Adrenal gland (tissue), 19 donors: ENCODE measurements at regions of chr1 and their contacts with region 1.

Region 1: DNA sequence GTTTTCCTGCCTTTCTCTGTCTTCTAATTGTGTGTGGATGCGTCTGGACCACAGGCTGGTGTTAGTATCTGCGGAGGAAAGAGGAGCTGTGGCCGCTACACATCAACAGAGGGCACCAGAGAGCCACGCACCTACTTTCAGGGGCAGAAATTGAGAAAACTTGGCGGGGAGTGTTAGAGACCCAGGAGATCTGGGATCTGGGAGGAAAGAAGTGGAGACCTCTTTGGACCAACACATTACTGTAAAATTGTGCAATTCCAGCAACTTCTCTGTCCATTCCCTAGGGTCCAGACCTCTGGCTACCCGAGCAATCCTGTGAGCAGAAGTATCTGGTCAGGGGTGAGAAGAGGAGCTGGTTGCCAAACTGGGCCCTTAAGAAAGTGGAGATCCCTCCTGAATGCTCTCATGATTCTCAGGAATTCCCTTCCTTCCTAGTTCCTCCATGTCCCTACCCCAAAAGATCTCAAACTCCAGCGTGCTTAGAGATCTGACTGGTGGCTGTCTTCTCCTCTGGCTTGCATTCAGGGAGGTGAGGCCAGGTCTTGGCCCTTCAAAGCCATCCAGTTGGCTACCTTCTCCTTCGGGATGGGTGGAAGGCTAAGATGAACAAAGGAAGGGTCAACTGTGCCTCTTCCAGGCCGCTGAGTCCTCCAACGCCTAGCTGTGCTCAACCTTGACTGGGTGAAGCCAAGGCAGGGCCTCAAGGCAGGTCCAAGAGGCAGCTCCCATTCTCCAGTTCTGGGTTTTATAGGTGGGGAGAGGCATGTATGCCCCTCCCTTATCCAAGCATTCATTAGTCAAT is 1.2 kb upstream of the KIRREL1 start:
- DNase-seq: peak; percentile 65 to 87 (median 77)
- H3K4me3 ChIP-seq: no peak overlapping the region
- H3K27ac ChIP-seq: peak overlapping the region in 4 of 5 donors; percentile 44 to 91 (median 52)
- H3K4me1 ChIP-seq: peaks cover 25 to 26% of the 10 kb centered on the region in 2 donors
- H3K27me3 ChIP-seq: no peaks in the 10 kb centered on the region
- CTCF ChIP-seq: peak; percentile 84 to 98 (median 94)
- POLR2A ChIP-seq: no peak

Region 2: DNA sequence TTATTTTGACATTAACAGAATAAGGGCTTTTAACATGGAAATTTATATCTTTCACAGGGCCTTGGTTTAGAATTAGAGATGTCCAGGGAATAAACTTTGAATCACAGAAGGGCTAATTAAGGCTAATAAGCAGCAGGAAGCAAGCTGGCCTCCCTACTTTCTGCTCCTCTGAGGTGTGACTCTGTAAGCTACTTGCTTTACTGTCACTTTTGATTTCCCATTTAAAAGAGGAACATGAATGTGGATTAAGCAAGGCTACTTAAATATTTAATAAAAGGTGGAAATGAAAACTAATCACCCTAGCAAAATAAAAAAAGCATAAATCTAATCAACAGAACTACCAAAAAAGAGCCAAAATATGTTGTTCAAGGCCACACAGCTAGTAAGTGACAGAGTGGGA is 121.7 kb before region 1 on chr1:
- intact Hi-C with region 1: no loop called
- DNase-seq: no peak
- H3K4me3 ChIP-seq: no peak overlapping the region
- H3K27ac ChIP-seq: no peak overlapping the region
- H3K4me1 ChIP-seq: no peaks in the 10 kb centered on the region
- H3K27me3 ChIP-seq: no peaks in the 10 kb centered on the region
- CTCF ChIP-seq: no peak
- POLR2A ChIP-seq: no peak

Region 3: GRCh38 chr1:158035976-158036583 is 43.8 kb after region 1 on chr1:
- intact Hi-C with region 1: loop called (anchors 5 kb)
- DNase-seq: peak in 6 of 7 donors; percentile 44 to 76 (median 64)
- H3K4me3 ChIP-seq: no peak overlapping the region
- H3K27ac ChIP-seq: peak overlapping the region in 2 of 5 donors; percentile 9 to 38
- H3K4me1 ChIP-seq: peaks cover 5 to 17% of the 10 kb centered on the region in 2 donors
- H3K27me3 ChIP-seq: no peaks in the 10 kb centered on the region
- CTCF ChIP-seq: peak; percentile 75 to 84 (median 81)
- POLR2A ChIP-seq: no peak

Region 4: GRCh38 chr1:158087320-158087927 is 95.2 kb after region 1 on chr1:
- intact Hi-C with region 1: loop called (anchors 2 to 5 kb)
- DNase-seq: peak; percentile 41 to 81 (median 67)
- H3K4me3 ChIP-seq: no peak overlapping the region
- H3K27ac ChIP-seq: no peak overlapping the region
- H3K4me1 ChIP-seq: no peaks in the 10 kb centered on the region
- H3K27me3 ChIP-seq: no peaks in the 10 kb centered on the region
- CTCF ChIP-seq: peak; percentile 67 to 90 (median 84)
- POLR2A ChIP-seq: no peak